A673 (cell line): ENCODE measurements at regions of chr4 and their contacts with region 1.

Region 1: GRCh38 chr4:5979976-5980375 is 38.3 kb downstream of the C4orf50 start:
- DNase-seq: peak; percentile 77
- H3K4me3 ChIP-seq: peak overlapping the region; percentile 9
- H3K27ac ChIP-seq: no peak overlapping the region
- H3K4me1 ChIP-seq: peaks cover 23% of the 10 kb centered on the region
- H3K27me3 ChIP-seq: no peaks in the 10 kb centered on the region
- CTCF ChIP-seq: peak; percentile 80

Region 2: DNA sequence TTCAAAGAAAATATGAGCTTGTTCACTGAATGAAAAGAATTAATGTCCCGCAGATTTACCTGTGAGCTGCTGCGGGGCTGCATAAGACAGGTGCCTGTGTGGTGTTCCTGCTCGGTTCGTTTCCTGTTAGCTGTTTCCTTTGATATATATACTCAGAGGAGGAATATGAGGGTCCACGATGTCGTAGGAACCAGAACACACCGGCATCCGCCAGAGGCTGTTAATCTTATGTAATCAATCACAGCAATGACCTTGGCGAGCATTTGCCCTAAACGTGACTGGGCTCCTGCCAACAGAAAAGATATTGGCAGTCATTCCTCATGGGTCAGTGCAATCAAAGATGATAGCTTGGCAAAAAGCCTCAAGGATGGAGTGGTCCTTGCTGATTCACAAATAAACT is 531.8 kb before region 1 on chr4:
- CTCF ChIA-PET with region 1: no interaction called
- POLR2A ChIA-PET with region 1: no interaction called
- intact Hi-C with region 1: no loop called
- DNase-seq: no peak
- H3K4me3 ChIP-seq: no peak overlapping the region
- H3K27ac ChIP-seq: no peak overlapping the region
- H3K4me1 ChIP-seq: no peaks in the 10 kb centered on the region
- H3K27me3 ChIP-seq: no peaks in the 10 kb centered on the region
- CTCF ChIP-seq: no peak

Region 3: DNA sequence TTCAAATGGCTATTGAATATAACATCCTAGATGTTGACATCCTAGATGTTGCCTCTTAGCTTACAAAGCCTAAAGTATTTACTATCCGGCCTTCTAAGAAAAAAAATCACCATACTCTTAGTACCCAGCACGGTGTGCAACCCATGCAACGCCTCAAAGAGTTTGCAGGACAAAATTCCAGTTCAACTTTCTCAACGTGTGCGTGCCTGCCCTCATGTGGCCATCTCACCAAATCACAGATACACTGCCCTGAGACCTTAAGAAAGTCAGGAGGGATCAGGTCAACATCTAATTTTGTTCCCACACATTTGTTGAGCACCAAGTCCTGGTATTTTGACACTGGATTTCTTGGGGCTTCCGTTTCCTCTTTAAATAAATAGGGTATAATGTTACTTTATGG is 155.3 kb before region 1 on chr4:
- CTCF ChIA-PET with region 1: interaction called, 11 read pairs
- POLR2A ChIA-PET with region 1: no interaction called
- intact Hi-C with region 1: loop called (anchors 2 kb)
- DNase-seq: peak; percentile 63
- H3K4me3 ChIP-seq: no peak overlapping the region
- H3K27ac ChIP-seq: no peak overlapping the region
- H3K4me1 ChIP-seq: no peaks in the 10 kb centered on the region
- H3K27me3 ChIP-seq: no peaks in the 10 kb centered on the region
- CTCF ChIP-seq: peak; percentile 68

Region 4: GRCh38 chr4:5870701-5871100 is 109.3 kb before region 1 on chr4:
- CTCF ChIA-PET with region 1: interaction called, 4 read pairs
- POLR2A ChIA-PET with region 1: no interaction called
- intact Hi-C with region 1: loop called (anchors 2 kb)
- DNase-seq: peak; percentile 95
- H3K4me3 ChIP-seq: peak overlapping the region; percentile 21
- H3K27ac ChIP-seq: peak overlapping the region; percentile 91
- H3K4me1 ChIP-seq: peaks cover 44% of the 10 kb centered on the region
- H3K27me3 ChIP-seq: no peaks in the 10 kb centered on the region
- CTCF ChIP-seq: peak; percentile 40

Region 5: GRCh38 chr4:5890063-5890727 is 89.8 kb before region 1 on chr4:
- CTCF ChIA-PET with region 1: no interaction called
- POLR2A ChIA-PET with region 1: no interaction called
- intact Hi-C with region 1: loop called (anchors 5 kb)
- DNase-seq: peak; percentile 89
- H3K4me3 ChIP-seq: peak overlapping the region; percentile 39
- H3K27ac ChIP-seq: no peak overlapping the region
- H3K4me1 ChIP-seq: peaks cover 40% of the 10 kb centered on the region
- H3K27me3 ChIP-seq: peaks cover 16% of the 10 kb centered on the region
- CTCF ChIP-seq: no peak

Region 6: DNA sequence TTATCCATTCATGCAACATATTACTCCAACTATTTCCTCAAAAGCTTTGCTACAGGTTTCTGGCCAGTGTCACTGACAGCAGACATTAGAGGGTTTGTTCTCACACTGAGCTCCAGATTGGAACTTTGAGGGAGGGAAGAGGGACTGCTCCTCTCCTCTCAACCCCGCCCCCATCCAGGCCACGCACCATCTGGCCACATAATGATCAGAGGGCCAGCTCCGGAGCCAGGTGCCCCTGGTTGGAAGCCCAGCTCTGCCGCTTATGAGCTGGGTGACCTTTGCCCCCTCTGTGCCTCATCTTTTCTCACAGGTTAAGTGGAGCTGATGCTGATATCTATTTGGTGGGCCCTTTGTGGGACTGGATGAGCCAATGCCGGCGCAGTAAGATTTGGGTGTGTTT is 17.6 kb before region 1 on chr4:
- CTCF ChIA-PET with region 1: interaction called, 10 read pairs
- POLR2A ChIA-PET with region 1: no interaction called
- intact Hi-C with region 1: no loop called
- DNase-seq: no peak
- H3K4me3 ChIP-seq: no peak overlapping the region
- H3K27ac ChIP-seq: no peak overlapping the region
- H3K4me1 ChIP-seq: no peaks in the 10 kb centered on the region
- H3K27me3 ChIP-seq: no peaks in the 10 kb centered on the region
- CTCF ChIP-seq: no peak